ENCODE measurements at regions of chr14 and their contacts with region 1.

Region 1: DNA sequence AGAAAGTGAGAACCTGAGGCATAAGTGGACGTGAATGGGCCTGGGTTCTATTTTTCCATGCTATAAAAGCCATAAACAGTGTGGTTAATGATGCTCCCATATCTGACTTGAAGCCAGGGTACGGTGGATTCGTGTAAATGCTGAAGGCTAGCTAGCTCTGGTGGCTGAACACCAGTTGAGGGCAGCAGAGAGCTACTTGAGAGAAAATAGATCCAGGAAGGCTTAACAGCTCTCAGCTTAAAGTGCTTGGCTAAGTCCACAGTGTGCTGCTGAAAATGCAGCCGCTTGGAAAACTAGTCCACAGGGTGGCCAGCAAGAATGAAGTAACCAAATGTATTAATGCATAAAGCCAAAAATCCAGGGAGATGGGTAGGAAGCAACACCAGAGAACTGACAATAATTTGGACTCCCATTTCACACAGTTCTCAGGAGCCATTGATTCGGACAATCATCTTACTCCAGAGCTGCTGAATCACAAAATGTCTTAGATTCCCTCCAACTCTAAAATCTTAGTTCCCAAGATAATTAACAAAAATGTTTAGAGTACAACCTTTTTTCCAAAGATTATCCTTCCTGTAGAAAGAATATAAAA is 15.0 kb upstream of the FOXG1 start:
- DNase-seq: peak; percentile 31
- H3K4me3 Mint-ChIP-seq: no peak overlapping the region
- H3K27ac Mint-ChIP-seq: no peak overlapping the region
- H3K4me1 Mint-ChIP-seq: no peaks in the 10 kb centered on the region
- H3K27me3 Mint-ChIP-seq: peaks cover 40% of the 10 kb centered on the region

Region 2: DNA sequence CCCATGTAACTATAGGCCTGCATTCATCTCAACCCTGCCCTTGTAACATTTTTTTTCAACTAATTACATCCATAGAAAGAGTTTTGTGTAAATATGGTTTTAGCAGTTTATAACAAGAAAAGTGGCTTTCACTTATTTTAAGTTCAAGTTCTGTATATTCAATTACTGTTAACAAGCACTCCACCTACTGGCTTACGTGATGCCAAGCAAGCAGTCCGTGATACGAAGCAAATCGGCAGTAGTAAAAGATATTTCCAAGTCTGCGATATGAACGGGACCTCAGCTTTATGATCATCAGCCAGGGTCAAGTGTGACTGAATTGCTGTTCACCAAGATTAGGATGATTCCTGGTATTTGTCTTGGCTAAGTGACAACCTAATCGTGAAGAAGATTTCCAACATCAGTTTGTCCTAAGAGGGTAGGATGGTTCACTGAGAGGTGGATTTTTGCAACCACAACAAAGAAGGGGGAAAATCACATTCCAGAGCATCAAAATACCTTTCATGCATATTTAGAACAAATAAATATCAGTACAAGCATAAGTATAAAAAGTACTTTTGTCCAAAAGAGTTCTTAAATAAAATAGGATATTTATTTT is 471.2 kb after region 1 on chr14:
- CTCF ChIA-PET with region 1: no interaction called
- intact Hi-C with region 1: loop called (anchors 2 kb)
- DNase-seq: no peak
- H3K4me3 Mint-ChIP-seq: no peak overlapping the region
- H3K27ac Mint-ChIP-seq: no peak overlapping the region
- H3K4me1 Mint-ChIP-seq: no peaks in the 10 kb centered on the region
- H3K27me3 Mint-ChIP-seq: no peaks in the 10 kb centered on the region

Region 3: GRCh38 chr14:29521526-29522137 is 770.1 kb after region 1 on chr14:
- CTCF ChIA-PET with region 1: interaction called, 3 read pairs
- intact Hi-C with region 1: loop called (anchors 5 kb)
- DNase-seq: peak; percentile 26
- H3K4me3 Mint-ChIP-seq: no peak overlapping the region
- H3K27ac Mint-ChIP-seq: no peak overlapping the region
- H3K4me1 Mint-ChIP-seq: no peaks in the 10 kb centered on the region
- H3K27me3 Mint-ChIP-seq: no peaks in the 10 kb centered on the region

Region 4: GRCh38 chr14:29536886-29537511 is 785.4 kb after region 1 on chr14:
- CTCF ChIA-PET with region 1: interaction called, 7 read pairs
- intact Hi-C with region 1: loop called (anchors 1 kb)
- DNase-seq: no peak
- H3K4me3 Mint-ChIP-seq: no peak overlapping the region
- H3K27ac Mint-ChIP-seq: no peak overlapping the region
- H3K4me1 Mint-ChIP-seq: no peaks in the 10 kb centered on the region
- H3K27me3 Mint-ChIP-seq: no peaks in the 10 kb centered on the region

Region 5: GRCh38 chr14:30045720-30046119 is 1294.2 kb after region 1 on chr14:
- CTCF ChIA-PET with region 1: no interaction called
- intact Hi-C with region 1: no loop called
- DNase-seq: no peak
- H3K4me3 Mint-ChIP-seq: no peak overlapping the region
- H3K27ac Mint-ChIP-seq: no peak overlapping the region
- H3K4me1 Mint-ChIP-seq: no peaks in the 10 kb centered on the region
- H3K27me3 Mint-ChIP-seq: no peaks in the 10 kb centered on the region

Region 6: DNA sequence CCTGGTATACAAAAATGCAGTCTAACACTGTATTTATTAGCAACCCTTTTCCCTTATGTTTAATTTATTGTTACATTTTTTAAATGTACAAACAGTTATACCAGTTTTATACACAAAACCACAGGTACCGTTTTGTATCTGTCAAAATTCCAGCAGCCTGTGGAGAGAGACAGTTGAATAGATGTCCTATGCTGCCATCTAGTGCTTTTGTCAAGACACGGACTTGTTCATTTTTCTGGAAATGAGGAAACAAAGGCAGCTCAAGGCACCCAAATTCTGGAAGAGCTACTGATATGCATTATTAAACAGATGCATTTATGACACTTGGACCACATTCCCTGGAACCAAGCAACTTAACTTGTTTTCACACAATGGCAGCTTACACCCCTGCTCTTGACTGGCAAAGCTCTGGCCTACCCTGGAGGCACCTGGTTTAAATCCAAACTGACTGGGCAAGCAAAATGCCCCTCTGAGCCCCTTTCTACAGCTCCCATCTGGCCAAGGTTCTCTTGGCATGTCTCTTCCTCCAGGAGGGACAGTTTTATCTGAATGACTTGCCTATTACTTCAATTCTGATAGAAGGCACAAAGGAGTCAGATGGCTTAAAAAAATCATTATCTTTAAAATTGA is 1463.0 kb after region 1 on chr14:
- CTCF ChIA-PET with region 1: interaction called, 3 read pairs
- intact Hi-C with region 1: loop called (anchors 5 kb)
- DNase-seq: peak; percentile 6
- H3K4me3 Mint-ChIP-seq: no peak overlapping the region
- H3K27ac Mint-ChIP-seq: no peak overlapping the region
- H3K4me1 Mint-ChIP-seq: no peaks in the 10 kb centered on the region
- H3K27me3 Mint-ChIP-seq: no peaks in the 10 kb centered on the region

Region 7: DNA sequence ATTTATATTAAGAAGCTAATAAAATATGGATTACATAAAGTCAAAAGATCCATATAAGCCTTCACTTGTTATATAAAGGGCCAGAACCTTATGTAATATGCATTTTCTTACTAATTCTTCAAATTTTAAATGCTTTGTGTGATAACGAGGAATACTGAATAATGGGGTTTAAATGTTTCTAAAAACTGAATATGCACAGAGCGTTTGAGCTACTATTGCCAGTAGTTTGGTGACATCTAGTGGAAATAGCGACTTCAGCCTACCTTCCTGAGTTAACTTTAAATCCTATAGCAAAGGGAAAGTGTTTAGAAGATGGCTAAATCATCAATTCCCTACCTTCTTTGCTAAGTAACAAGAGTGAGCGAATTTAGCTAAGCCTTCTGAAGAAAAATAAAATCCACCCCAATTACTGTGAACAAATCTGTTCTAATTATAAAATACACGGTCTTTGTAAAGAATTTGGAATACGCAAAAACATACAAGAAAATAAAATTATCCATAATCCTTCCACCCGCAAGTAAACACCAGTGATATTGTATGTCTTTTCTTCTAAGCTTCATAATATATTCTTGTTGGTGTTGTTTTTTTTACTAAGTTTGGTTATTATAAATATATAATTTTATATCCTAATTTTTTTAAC is 1691.9 kb after region 1 on chr14:
- CTCF ChIA-PET with region 1: no interaction called
- intact Hi-C with region 1: loop called (anchors 10 kb)
- DNase-seq: no peak
- H3K4me3 Mint-ChIP-seq: no peak overlapping the region
- H3K27ac Mint-ChIP-seq: no peak overlapping the region
- H3K4me1 Mint-ChIP-seq: no peaks in the 10 kb centered on the region
- H3K27me3 Mint-ChIP-seq: peaks cover 2% of the 10 kb centered on the region